ENCODE measurements at regions of chr12 and their contacts with region 1.

Region 1: DNA sequence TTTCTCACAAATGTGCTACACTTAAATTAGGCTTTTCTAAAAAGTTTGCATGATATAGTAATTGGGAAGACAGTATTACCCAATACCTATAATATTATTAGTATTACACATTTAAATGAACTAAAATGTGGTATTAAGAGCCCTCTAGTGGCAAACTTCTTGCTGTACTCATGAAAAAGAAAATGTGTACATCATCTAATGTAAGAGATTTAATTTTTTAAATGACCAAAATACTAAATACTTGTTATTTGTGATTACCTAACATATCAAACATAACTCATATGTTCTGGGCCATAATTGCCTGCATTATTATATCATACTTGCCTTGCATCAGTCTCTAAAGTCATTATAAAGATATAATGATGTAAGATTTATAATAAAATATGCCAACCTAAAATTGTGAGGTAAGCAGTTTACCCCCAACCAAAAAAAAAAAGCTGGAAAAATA is 64.2 kb downstream of the DNAI7 start:
- DNase-seq: peak; percentile 31
- H3K27ac ChIP-seq: no peak overlapping the region
- CTCF ChIP-seq: peak; percentile 43; the same call in 1 of the 2 replicates

Region 2: DNA sequence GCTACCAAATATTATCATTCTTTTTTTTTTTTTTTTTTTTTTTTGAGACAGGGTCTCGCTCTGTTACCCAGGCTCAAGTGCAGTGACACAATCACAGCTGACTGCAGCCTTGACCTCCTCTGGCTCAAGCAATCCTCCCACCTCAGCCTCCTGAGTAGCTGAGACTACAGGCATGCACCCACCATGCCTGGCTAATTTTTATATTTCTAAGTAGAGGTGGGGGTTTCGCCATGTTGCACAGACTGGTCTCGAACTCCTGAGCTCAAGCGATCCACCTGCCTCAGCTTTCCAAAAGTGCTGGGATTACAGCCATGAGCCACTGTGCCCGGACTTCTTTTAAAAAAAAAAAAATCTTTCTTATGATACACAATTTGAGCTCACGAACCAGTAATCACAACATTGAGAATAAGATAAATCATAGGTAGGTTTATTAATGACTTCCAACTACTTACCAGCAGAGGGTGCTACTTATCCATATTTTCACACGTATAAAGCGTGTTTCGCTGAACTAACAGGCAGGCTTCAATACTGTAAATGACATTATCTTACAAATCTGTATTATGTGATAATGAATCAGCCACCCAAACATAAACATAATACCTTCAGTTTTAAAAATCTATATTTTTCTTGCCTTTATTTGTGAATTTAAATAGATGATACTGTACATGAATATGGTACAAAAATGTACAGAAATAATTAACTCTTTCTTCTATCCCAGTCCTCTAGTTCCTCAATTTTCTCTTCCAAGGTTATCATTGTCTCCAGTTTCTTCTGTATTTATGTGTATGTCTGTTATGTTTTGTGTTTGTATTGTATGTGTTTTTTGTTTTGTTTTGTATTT is 139.3 kb before region 1 on chr12:
- CTCF ChIA-PET with region 1: interaction called, 15 read pairs
- POLR2A ChIA-PET with region 1: no interaction called
- DNase-seq: peak; percentile 55
- H3K27ac ChIP-seq: no peak overlapping the region
- CTCF ChIP-seq: no peak; the same call in 1 of the 2 replicates